ENCODE measurements at regions of chr11 and their contacts with region 1.

Region 1: GRCh38 chr11:128472128-128473089 is 114.9 kb downstream of the ETS1 start:
- DNase-seq: peak; percentile 86
- H3K4me3 Mint-ChIP-seq: peak overlapping the region; percentile 56
- H3K27ac Mint-ChIP-seq: peak overlapping the region; percentile 97
- H3K4me1 Mint-ChIP-seq: peaks cover 95% of the 10 kb centered on the region
- H3K27me3 Mint-ChIP-seq: no peaks in the 10 kb centered on the region

Region 2: GRCh38 chr11:128052912-128053641 is 419.3 kb before region 1 on chr11:
- CTCF ChIA-PET with region 1: no interaction called
- intact Hi-C with region 1: loop called (anchors 5 kb)
- DNase-seq: no peak
- H3K4me3 Mint-ChIP-seq: peak overlapping the region; percentile 49
- H3K27ac Mint-ChIP-seq: peak overlapping the region; percentile 86
- H3K4me1 Mint-ChIP-seq: peaks cover 67% of the 10 kb centered on the region
- H3K27me3 Mint-ChIP-seq: no peaks in the 10 kb centered on the region

Region 3: GRCh38 chr11:128302425-128303186 is 169.8 kb before region 1 on chr11:
- CTCF ChIA-PET with region 1: interaction called, 7 read pairs
- intact Hi-C with region 1: loop called (anchors 1 kb)
- DNase-seq: peak; percentile 79
- H3K4me3 Mint-ChIP-seq: peak overlapping the region; percentile 74
- H3K27ac Mint-ChIP-seq: peak overlapping the region; percentile 93
- H3K4me1 Mint-ChIP-seq: peaks cover 80% of the 10 kb centered on the region
- H3K27me3 Mint-ChIP-seq: no peaks in the 10 kb centered on the region

Region 4: DNA sequence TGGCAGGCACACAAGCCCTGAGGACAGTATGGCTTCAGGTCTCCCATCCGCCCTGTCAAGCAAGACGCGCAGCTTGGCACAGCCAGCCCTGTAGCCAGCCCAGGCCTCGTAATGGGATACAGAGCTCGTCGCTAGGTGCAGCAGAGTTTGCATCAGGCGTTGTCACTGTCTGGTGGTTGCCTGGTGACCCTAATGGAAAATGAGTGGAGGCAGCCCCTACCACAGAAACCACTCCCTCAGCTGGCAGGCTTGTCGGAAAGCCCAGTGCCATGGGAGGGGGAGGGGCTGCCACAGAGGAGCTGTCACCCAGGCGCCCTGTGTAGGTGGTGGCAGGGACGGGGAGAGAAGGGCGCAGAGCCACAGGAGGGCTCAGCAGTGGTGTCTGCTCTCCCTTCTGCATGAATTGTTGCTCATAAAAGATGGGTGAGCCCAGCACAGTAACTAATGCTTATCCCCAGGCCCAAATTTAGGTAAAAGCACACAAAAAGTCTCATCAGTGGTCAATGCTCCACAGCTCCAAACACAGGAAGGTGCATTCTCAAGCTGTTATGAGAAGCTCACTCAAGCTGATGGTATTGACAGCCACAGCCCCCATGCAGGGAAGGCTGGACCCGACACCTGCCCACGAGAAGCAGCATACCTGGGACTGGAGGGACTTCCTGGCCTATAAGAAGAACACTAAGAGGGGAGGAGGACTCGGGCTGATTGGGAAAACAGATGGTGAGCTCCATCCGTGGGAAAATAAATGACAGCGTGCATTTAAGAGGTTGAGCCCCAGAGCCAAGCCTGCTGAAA is 49.6 kb before region 1 on chr11:
- CTCF ChIA-PET with region 1: interaction called, 5 read pairs
- intact Hi-C with region 1: loop called (anchors 1 kb)
- DNase-seq: peak; percentile 96
- H3K4me3 Mint-ChIP-seq: peak overlapping the region; percentile 44
- H3K27ac Mint-ChIP-seq: peak overlapping the region; percentile 75
- H3K4me1 Mint-ChIP-seq: peaks cover 63% of the 10 kb centered on the region
- H3K27me3 Mint-ChIP-seq: no peaks in the 10 kb centered on the region

Region 5: DNA sequence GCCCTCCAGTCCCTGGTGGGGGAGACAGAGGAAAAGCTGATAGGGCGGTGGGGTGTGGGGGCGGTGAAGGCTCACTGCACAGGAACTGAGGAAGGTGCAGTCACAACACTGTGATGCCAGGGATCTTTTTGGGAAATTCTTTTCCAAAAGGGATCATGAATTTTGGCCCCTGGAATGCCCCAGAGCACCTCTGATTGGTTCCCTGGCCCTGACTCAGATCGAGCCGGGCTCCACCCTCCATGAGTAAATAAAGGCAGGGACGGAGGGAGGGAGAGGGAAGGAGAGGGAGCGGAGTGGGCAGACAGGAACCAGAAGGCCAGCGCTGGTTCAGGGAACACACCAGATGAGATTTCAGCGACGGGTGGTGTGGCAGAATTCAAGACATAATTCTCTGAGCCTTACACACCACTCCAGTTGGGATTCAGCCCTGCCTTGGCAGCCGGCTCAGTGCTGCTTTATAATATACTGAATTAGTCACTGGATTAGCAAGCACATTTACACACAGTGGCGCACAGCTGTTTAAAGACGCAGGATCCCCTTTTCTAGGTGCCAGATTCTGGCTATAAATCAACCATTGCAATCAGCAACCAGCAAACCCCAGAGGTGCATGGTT is 34.7 kb after region 1 on chr11:
- CTCF ChIA-PET with region 1: interaction called, 12 read pairs
- intact Hi-C with region 1: loop called (anchors 1 kb)
- DNase-seq: peak; percentile 82
- H3K4me3 Mint-ChIP-seq: peak overlapping the region; percentile 77
- H3K27ac Mint-ChIP-seq: peak overlapping the region; percentile 97
- H3K4me1 Mint-ChIP-seq: peaks cover 88% of the 10 kb centered on the region
- H3K27me3 Mint-ChIP-seq: no peaks in the 10 kb centered on the region

Region 6: GRCh38 chr11:128582496-128583366 is 110.3 kb after region 1 on chr11:
- CTCF ChIA-PET with region 1: interaction called, 3 read pairs
- intact Hi-C with region 1: loop called (anchors 1 kb)
- DNase-seq: peak; percentile 50
- H3K4me3 Mint-ChIP-seq: peak overlapping the region; percentile 69
- H3K27ac Mint-ChIP-seq: peak overlapping the region; percentile 78
- H3K4me1 Mint-ChIP-seq: peaks cover 62% of the 10 kb centered on the region
- H3K27me3 Mint-ChIP-seq: no peaks in the 10 kb centered on the region

Region 7: GRCh38 chr11:128757235-128757711 is 284.9 kb after region 1 on chr11:
- CTCF ChIA-PET with region 1: no interaction called
- intact Hi-C with region 1: loop called (anchors 5 kb)
- DNase-seq: peak; percentile 85
- H3K4me3 Mint-ChIP-seq: peak overlapping the region; percentile 14
- H3K27ac Mint-ChIP-seq: peak overlapping the region; percentile 86
- H3K4me1 Mint-ChIP-seq: peaks cover 74% of the 10 kb centered on the region
- H3K27me3 Mint-ChIP-seq: no peaks in the 10 kb centered on the region

Region 8: GRCh38 chr11:128802358-128802981 is 330.1 kb after region 1 on chr11:
- CTCF ChIA-PET with region 1: no interaction called
- intact Hi-C with region 1: no loop called
- DNase-seq: no peak
- H3K4me3 Mint-ChIP-seq: no peak overlapping the region
- H3K27ac Mint-ChIP-seq: peak overlapping the region; percentile 4
- H3K4me1 Mint-ChIP-seq: peaks cover 18% of the 10 kb centered on the region
- H3K27me3 Mint-ChIP-seq: no peaks in the 10 kb centered on the region

Region 9: GRCh38 chr11:129315781-129316481 is 843.5 kb after region 1 on chr11:
- CTCF ChIA-PET with region 1: no interaction called
- intact Hi-C with region 1: no loop called
- DNase-seq: no peak
- H3K4me3 Mint-ChIP-seq: no peak overlapping the region
- H3K27ac Mint-ChIP-seq: no peak overlapping the region
- H3K4me1 Mint-ChIP-seq: peaks cover 7% of the 10 kb centered on the region
- H3K27me3 Mint-ChIP-seq: no peaks in the 10 kb centered on the region